ENCODE measurements at regions of chr5 and their contacts with region 1.

Region 1: GRCh38 chr5:36162810-36163486 is 11.0 kb downstream of the SKP2 start:
- DNase-seq: no peak
- ATAC-seq: no peak
- H3K4me3 ChIP-seq: no peak overlapping the region
- H3K27ac ChIP-seq: no peak overlapping the region
- H3K4me1 ChIP-seq: 0 out of 2 replicates have a peak, but pooled peaks cover 3% of the 10 kb centered on the region
- H3K27me3 ChIP-seq: no peaks in the 10 kb centered on the region
- CTCF ChIP-seq: no peak
- EP300 ChIP-seq: no peak
- POLR2A ChIP-seq: no peak
- RAD21 ChIP-seq: no peak

Region 2: GRCh38 chr5:36228505-36228904 is 65.6 kb after region 1 on chr5:
- CTCF ChIA-PET with region 1: no interaction called
- POLR2A ChIA-PET with region 1: interaction called, 4 read pairs
- RAD21 ChIA-PET with region 1: no interaction called
- SMC1A ChIA-PET with region 1: no interaction called
- in situ Hi-C with region 1: loop called (anchors 10 kb)
- intact Hi-C with region 1: no loop called
- DNase-seq: no peak
- ATAC-seq: no peak
- H3K4me3 ChIP-seq: no peak overlapping the region
- H3K27ac ChIP-seq: no peak overlapping the region
- H3K4me1 ChIP-seq: no peaks in the 10 kb centered on the region
- H3K27me3 ChIP-seq: no peaks in the 10 kb centered on the region
- CTCF ChIP-seq: no peak
- EP300 ChIP-seq: no peak
- POLR2A ChIP-seq: no peak
- RAD21 ChIP-seq: no peak